CD4-positive, alpha-beta T cell (primary cell): ENCODE measurements at regions of chr6 and their contacts with region 1.

Region 1: GRCh38 chr6:26537846-26538571 is at the start of gene HMGN4:
- DNase-seq: peak; percentile 66 to 97 (median 76)
- ATAC-seq: peak; percentile 70
- H3K4me3 ChIP-seq: peak within 1 kb of the TSS; percentile 93
- H3K4me3 Mint-ChIP-seq: peak within 1 kb of the TSS; percentile 94
- H3K27ac ChIP-seq: peak within 1 kb of the TSS; percentile 84 to 91
- H3K27ac Mint-ChIP-seq: peak within 1 kb of the TSS; percentile 98
- H3K4me1 ChIP-seq: peaks cover 51% of the 10 kb centered on the region
- H3K4me1 Mint-ChIP-seq: peaks cover 57% of the 10 kb centered on the region
- H3K27me3 ChIP-seq: no peaks in the 10 kb centered on the region
- H3K27me3 Mint-ChIP-seq: peaks cover 13% of the 10 kb centered on the region
- CTCF ChIP-seq: no peak
- total RNA-seq, gene HMGN4: 22.7 to 24.8 TPM

Region 2: DNA sequence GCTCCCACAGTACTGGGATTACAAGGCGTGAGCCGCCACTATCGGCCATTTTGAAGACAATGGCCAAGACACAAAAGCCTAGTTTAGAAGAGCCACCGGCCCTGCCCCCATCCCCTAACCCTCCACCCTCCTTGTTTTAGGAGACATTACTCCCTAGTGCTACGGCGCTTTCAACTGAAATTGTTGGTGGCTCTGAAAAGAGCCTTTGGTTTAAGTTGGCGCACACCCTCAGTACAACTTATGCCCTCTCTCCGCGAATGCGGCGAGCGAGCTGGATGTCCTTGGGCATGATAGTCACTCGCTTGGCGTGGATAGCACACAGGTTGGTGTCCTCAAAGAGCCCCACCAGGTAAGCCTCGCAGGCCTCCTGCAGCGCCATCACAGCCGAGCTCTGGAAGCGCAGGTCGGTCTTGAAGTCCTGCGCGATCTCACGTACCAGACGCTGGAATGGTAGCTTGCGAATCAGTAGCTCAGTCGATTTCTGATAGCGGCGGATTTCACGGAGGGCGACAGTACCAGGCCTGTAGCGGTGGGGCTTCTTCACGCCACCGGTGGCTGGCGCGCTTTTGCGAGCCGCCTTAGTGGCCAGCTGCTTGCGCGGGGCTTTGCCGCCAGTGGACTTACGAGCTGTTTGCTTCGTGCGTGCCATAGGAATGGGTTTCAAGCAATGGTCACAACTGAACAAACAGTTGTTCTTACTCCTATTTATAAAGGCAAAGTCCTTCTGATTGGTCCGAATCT is 287.9 kb before region 1 on chr6:
- CTCF ChIA-PET with region 1: no interaction called
- POLR2A ChIA-PET with region 1: interaction called, 14 read pairs
- intact Hi-C with region 1: no loop called
- DNase-seq: peak; percentile 64 to 93 (median 74)
- ATAC-seq: peak; percentile 78
- H3K4me3 ChIP-seq: peak overlapping the region; percentile 75
- H3K4me3 Mint-ChIP-seq: peak overlapping the region; percentile 97
- H3K27ac ChIP-seq: peak overlapping the region; percentile 72 to 80
- H3K27ac Mint-ChIP-seq: peak overlapping the region; percentile 88
- H3K4me1 ChIP-seq: peaks cover 29% of the 10 kb centered on the region
- H3K4me1 Mint-ChIP-seq: peaks cover 44% of the 10 kb centered on the region
- H3K27me3 ChIP-seq: no peaks in the 10 kb centered on the region
- H3K27me3 Mint-ChIP-seq: no peaks in the 10 kb centered on the region
- CTCF ChIP-seq: no peak

Region 3: DNA sequence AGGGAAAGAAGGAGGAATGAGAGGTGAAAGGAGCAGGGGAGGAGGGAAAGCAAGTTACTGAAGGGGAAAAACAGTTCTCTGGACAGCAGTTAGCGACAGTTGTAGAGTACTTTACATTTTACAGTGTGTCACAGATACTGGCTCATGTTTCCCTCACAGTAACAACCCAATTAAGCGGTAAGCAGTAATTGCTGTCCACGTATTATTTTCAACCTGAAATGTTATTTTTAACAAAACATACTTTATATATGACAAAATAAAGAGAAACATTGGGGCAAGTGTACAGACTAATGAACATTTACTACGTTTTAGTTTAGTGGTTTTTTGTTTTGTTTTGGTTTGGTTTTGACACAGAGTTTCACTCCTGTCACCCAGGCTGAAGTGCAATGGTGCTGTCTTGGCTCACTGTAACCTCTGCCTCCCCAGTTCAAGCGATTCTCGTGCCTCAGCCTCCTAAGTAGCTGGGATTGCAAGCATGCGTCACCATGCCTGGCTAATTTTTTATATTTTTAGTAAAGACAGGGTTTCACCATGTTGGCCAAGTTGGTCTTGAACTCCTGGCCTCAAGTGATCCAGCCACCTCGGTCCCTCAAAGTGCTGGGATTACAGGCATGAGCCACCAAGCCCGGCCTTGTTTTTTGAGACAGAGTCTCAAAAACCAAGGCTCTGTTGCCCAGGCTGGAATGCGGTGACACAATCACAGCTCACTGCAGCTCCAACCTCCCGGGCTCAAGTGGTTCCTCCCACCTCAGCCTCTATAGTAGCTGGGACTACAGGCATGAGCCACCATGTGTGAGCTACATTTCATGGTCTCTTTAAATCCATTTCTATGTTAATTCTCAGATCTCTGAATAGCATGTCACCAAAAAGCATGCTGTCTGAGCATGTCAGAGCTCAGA is 195.7 kb before region 1 on chr6:
- CTCF ChIA-PET with region 1: interaction called, 14 read pairs
- POLR2A ChIA-PET with region 1: interaction called, 15 read pairs
- intact Hi-C with region 1: no loop called
- DNase-seq: no peak
- ATAC-seq: peak; percentile 14
- H3K4me3 ChIP-seq: peak overlapping the region; percentile 42
- H3K4me3 Mint-ChIP-seq: peak overlapping the region; percentile 71
- H3K27ac ChIP-seq: no peak overlapping the region
- H3K27ac Mint-ChIP-seq: no peak overlapping the region
- H3K4me1 ChIP-seq: peaks cover 12% of the 10 kb centered on the region
- H3K4me1 Mint-ChIP-seq: peaks cover 7% of the 10 kb centered on the region
- H3K27me3 ChIP-seq: no peaks in the 10 kb centered on the region
- H3K27me3 Mint-ChIP-seq: no peaks in the 10 kb centered on the region
- CTCF ChIP-seq: no peak

Region 4: DNA sequence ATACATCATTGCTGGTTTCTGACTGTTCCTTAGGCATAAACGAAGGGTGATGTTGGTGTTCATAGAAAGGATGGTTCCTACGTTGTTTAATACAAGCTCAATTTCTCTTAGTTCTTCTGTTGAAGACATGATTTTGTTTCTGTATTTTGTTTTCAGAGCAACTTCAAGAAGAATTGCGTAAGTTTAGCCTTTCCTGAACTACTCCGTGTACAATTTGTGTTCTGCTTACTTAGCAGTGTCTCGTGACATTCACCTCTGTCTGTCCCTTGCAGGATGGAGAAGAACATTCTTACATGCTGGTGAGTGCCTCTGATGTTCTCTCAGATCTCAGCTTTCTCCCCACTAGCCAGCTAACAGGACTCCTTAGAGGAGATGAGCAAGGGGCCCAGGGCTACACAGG is 147.5 kb before region 1 on chr6:
- CTCF ChIA-PET with region 1: no interaction called
- POLR2A ChIA-PET with region 1: no interaction called
- intact Hi-C with region 1: no loop called
- DNase-seq: no peak
- ATAC-seq: no peak
- H3K4me3 ChIP-seq: no peak overlapping the region
- H3K4me3 Mint-ChIP-seq: no peak overlapping the region
- H3K27ac ChIP-seq: no peak overlapping the region
- H3K27ac Mint-ChIP-seq: no peak overlapping the region
- H3K4me1 ChIP-seq: no peaks in the 10 kb centered on the region
- H3K4me1 Mint-ChIP-seq: no peaks in the 10 kb centered on the region
- H3K27me3 ChIP-seq: no peaks in the 10 kb centered on the region
- H3K27me3 Mint-ChIP-seq: no peaks in the 10 kb centered on the region
- CTCF ChIP-seq: no peak

Region 5: DNA sequence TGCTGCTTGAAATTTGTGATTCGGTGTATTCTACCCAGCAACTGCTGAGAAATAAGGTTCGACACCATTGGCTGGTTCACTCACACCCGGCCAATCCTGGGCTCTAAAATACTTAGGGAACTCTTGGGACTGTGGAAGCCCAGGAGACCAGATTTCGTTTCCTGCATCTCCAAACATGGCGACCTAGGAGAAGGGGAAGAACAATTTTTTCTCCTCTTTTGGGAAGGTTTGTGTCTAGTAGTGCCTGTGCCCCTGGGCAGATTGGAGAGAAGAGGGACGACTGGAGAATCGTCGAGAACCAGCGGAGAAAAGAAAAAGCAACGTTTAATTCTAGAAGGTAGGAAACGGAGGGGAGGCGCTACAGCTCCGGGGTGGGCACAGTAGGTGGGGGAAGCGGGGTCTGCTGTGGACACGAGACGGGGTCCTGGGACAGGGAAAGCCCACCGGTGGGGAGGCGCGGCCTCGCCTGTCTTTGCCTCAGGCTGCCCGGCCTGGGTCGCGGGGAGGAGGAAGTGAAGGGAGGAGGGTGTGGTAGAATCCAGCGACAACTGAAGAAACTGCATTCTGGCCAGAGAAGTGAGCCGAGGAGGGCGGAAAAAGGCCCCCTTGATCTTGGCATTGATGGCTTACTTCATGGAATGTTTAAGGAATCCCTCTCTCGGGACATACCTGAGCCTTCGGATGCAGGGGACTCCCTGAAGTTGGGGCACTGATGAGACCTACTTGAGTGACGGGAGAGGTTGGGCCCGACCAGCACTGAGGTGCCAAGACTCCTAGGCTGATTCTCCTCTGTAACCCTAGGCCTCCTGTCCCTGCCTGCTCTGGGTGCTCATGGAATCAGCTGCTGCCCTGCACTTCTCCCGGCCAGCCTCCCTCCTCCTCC is 80.0 kb before region 1 on chr6 and contains the start of gene BTN2A1:
- CTCF ChIA-PET with region 1: no interaction called
- POLR2A ChIA-PET with region 1: interaction called, 3 read pairs
- intact Hi-C with region 1: loop called in 1 of 2 experiments (anchors 5 kb)
- DNase-seq: peak; percentile 30 to 91 (median 52)
- ATAC-seq: peak; percentile 97
- H3K4me3 ChIP-seq: peak within 1 kb of the TSS; percentile 91
- H3K4me3 Mint-ChIP-seq: peak within 1 kb of the TSS; percentile 98
- H3K27ac ChIP-seq: peak within 1 kb of the TSS; percentile 73 to 91
- H3K27ac Mint-ChIP-seq: peak within 1 kb of the TSS; percentile 92
- H3K4me1 ChIP-seq: peaks cover 44% of the 10 kb centered on the region
- H3K4me1 Mint-ChIP-seq: peaks cover 64% of the 10 kb centered on the region
- H3K27me3 ChIP-seq: no peaks in the 10 kb centered on the region
- H3K27me3 Mint-ChIP-seq: no peaks in the 10 kb centered on the region
- CTCF ChIP-seq: no peak
- total RNA-seq, gene BTN2A1: 16.2 to 17.5 TPM

Region 6: DNA sequence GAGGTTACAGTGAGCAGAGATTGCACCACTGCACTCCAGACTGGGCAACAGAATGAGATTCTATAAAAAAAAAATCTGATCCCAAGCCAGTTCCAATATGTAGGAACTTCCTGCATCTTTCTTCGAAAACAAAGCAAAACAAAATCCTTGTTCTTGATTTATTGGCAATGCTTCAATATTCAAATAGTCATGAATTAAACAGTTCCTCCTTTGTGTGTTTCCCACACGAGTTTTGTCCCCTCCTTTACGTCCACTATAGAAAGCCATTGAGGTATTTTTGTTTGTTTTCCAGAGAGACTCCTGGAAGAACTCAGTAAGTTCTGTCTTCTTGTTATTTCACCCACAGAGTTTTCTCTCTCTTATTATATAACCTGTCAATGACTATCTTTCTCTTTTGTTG is 30.4 kb before region 1 on chr6:
- CTCF ChIA-PET with region 1: no interaction called
- POLR2A ChIA-PET with region 1: no interaction called
- intact Hi-C with region 1: no loop called
- DNase-seq: no peak
- ATAC-seq: no peak
- H3K4me3 ChIP-seq: no peak overlapping the region
- H3K4me3 Mint-ChIP-seq: no peak overlapping the region
- H3K27ac ChIP-seq: no peak overlapping the region
- H3K27ac Mint-ChIP-seq: no peak overlapping the region
- H3K4me1 ChIP-seq: no peaks in the 10 kb centered on the region
- H3K4me1 Mint-ChIP-seq: no peaks in the 10 kb centered on the region
- H3K27me3 ChIP-seq: peaks cover 0 to 16% of the 10 kb centered on the region in 2 experiments
- H3K27me3 Mint-ChIP-seq: peaks cover 22% of the 10 kb centered on the region
- CTCF ChIP-seq: no peak

Region 7: DNA sequence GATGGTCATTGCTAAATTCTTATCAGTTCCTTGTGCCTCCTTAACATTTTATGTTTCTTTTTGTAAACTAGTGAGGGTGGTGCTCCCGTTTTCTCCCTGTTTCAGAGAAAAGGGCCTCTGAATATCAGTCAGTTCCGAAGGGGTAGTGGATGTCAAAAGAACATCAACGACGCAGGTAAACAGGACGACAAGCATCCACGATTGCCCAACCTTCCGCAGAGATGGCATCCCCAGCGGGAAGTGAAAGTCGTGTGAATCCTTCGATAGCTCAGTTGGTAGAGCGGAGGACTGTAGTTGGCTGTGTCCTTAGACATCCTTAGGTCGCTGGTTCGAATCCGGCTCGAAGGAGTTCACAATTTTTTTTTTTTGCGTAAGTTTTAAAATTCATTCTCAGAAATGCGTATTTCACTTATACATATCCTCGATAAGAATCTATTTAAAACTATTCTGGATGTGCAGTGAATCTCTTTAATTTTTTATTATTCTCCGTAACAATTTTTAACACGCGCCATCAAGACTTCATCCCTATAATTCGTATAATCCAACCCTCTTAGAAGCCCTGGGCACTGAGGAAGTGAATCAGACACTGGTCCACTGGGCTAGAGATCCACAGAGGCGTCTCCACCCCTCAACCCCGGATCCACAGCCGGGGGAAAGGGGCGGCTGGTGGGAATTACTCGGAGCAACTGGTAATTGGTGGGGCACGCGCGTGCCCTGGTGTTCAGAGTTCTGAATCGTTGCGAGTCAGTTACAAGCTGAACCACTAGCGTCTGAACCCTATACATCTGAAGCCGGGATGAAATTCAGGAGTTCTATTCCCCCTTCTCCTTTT is 30.8 kb after region 1 on chr6:
- CTCF ChIA-PET with region 1: interaction called, 8 read pairs
- POLR2A ChIA-PET with region 1: interaction called, 48 read pairs
- intact Hi-C with region 1: loop called in 1 of 2 experiments (anchors 1 kb)
- DNase-seq: peak; percentile 96 to 100 (median 98)
- ATAC-seq: peak; percentile 74
- H3K4me3 ChIP-seq: peak overlapping the region; percentile 55
- H3K4me3 Mint-ChIP-seq: peak overlapping the region; percentile 97
- H3K27ac ChIP-seq: peak overlapping the region; percentile 37 to 53
- H3K27ac Mint-ChIP-seq: peak overlapping the region; percentile 100
- H3K4me1 ChIP-seq: peaks cover 21% of the 10 kb centered on the region
- H3K4me1 Mint-ChIP-seq: peaks cover 29% of the 10 kb centered on the region
- H3K27me3 ChIP-seq: no peaks in the 10 kb centered on the region
- H3K27me3 Mint-ChIP-seq: peaks cover 16% of the 10 kb centered on the region
- CTCF ChIP-seq: peak; percentile 58

Region 8: GRCh38 chr6:27672113-27672799 is 1134.2 kb after region 1 on chr6:
- CTCF ChIA-PET with region 1: no interaction called
- POLR2A ChIA-PET with region 1: no interaction called
- intact Hi-C with region 1: no loop called
- DNase-seq: peak in 1 of 14 experiments; percentile 50
- ATAC-seq: peak; percentile 41
- H3K4me3 ChIP-seq: no peak overlapping the region
- H3K4me3 Mint-ChIP-seq: peak overlapping the region; percentile 5
- H3K27ac ChIP-seq: no peak overlapping the region
- H3K27ac Mint-ChIP-seq: peak overlapping the region; percentile 3
- H3K4me1 ChIP-seq: peaks cover 28% of the 10 kb centered on the region
- H3K4me1 Mint-ChIP-seq: peaks cover 40% of the 10 kb centered on the region
- H3K27me3 ChIP-seq: peaks cover 66 to 94% of the 10 kb centered on the region in 2 experiments
- H3K27me3 Mint-ChIP-seq: peaks cover 98% of the 10 kb centered on the region
- CTCF ChIP-seq: no peak